Right cardiac atrium (tissue), 5 donors: ENCODE measurements at regions of chr1 and their contacts with region 1.

Region 1: DNA sequence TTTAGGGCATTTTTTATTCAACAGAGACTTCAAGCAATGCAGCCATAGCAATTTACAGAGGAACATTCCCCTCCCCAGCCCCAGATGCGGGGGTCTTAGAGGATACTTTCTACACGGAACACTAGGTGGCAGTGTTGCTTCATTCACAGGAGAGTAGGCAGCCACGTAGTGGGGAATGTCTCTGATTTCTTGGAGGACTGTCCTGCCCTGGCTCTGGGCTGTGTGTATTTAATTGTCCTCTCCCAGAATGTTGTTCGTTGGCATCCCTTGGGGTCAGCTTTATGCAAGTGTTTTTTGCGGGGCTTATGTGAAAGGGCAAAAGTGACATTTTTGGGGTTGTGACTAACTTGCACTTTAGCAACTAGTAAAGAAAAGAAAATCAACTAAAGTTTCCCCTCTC is 96.9 kb downstream of the PAPPA2 start:
- DNase-seq: peak in 1 of 3 donors; percentile 22
- ATAC-seq: peak; percentile 90 to 91
- H3K4me3 ChIP-seq: no peak overlapping the region
- H3K27ac ChIP-seq: no peak overlapping the region
- H3K4me1 ChIP-seq: peaks cover 3% of the 10 kb centered on the region
- H3K27me3 ChIP-seq: no peaks in the 10 kb centered on the region

Region 2: DNA sequence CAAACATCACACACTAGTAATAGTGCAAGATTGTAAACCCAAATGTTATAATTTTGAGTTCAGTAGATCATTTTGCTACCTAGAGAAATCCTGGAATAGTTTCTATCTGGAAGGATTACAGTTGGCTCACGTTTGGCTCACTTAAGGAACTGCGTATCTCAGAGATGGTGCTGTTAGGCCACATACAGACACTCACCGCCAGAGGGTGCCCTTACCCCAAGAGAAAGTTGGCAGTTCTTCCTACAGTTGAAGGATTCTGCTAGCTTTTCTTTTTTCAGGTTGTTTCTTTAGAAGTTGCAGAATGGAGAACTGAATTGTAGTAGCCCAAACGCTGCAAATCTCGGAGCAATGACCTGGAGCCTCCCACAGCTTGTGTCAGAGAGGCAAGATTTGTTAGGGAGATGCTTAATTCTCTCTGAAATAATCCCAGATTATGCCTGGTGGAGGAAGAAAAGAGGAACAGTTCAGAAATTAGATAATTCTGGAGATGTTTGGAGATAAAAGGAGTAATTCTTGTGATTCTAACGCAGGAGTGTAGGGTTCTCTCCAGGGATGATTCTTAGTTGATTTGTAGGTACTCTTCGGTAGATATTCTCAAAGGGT is 184.8 kb before region 1 on chr1:
- intact Hi-C with region 1: loop called in 3 of 4 experiments (anchors 5 to 10 kb)
- DNase-seq: peak; percentile 60 to 89 (median 79)
- ATAC-seq: peak; percentile 80 to 82
- H3K4me3 ChIP-seq: no peak overlapping the region
- H3K27ac ChIP-seq: no peak overlapping the region
- H3K4me1 ChIP-seq: no peaks in the 10 kb centered on the region
- H3K27me3 ChIP-seq: no peaks in the 10 kb centered on the region

Region 3: GRCh38 chr1:176501599-176501998 is 58.3 kb before region 1 on chr1:
- intact Hi-C with region 1: no loop called
- DNase-seq: no peak
- ATAC-seq: no peak
- H3K4me3 ChIP-seq: no peak overlapping the region
- H3K27ac ChIP-seq: no peak overlapping the region
- H3K4me1 ChIP-seq: no peaks in the 10 kb centered on the region
- H3K27me3 ChIP-seq: no peaks in the 10 kb centered on the region

Region 4: GRCh38 chr1:176691251-176692228 is 131.7 kb after region 1 on chr1:
- intact Hi-C with region 1: loop called in 2 of 4 experiments (anchors 5 to 10 kb)
- DNase-seq: no peak
- ATAC-seq: peak; percentile 53 to 62
- H3K4me3 ChIP-seq: no peak overlapping the region
- H3K27ac ChIP-seq: peak overlapping the region; percentile 86
- H3K4me1 ChIP-seq: no peaks in the 10 kb centered on the region
- H3K27me3 ChIP-seq: no peaks in the 10 kb centered on the region

Region 5: GRCh38 chr1:176880954-176881595 is 321.2 kb after region 1 on chr1:
- intact Hi-C with region 1: loop called in 2 of 4 experiments (anchors 2 to 5 kb)
- DNase-seq: peak; percentile 71 to 83 (median 77)
- ATAC-seq: peak; percentile 67 to 85
- H3K4me3 ChIP-seq: no peak overlapping the region
- H3K27ac ChIP-seq: no peak overlapping the region
- H3K4me1 ChIP-seq: no peaks in the 10 kb centered on the region
- H3K27me3 ChIP-seq: no peaks in the 10 kb centered on the region